ENCODE measurements at regions of chr6 and their contacts with region 1.

Region 1: GRCh38 chr6:4018172-4018905 is 60.6 kb downstream of the FAM217A start:
- DNase-seq: peak; percentile 94 to 96 (median 95)
- H3K4me3 ChIP-seq: peak overlapping the region; percentile 57 to 64
- H3K4me3 Mint-ChIP-seq: peak overlapping the region; percentile 89 to 99 (median 96)
- H3K27ac ChIP-seq: peak overlapping the region; percentile 91
- H3K27ac Mint-ChIP-seq: peak overlapping the region; percentile 90 to 98 (median 96)
- H3K4me1 ChIP-seq: peaks cover 71% of the 10 kb centered on the region
- H3K4me1 Mint-ChIP-seq: peaks cover 49 to 88% (median 66%) of the 10 kb centered on the region in 4 donors
- H3K27me3 ChIP-seq: no peaks in the 10 kb centered on the region
- H3K27me3 Mint-ChIP-seq: no peaks in the 10 kb centered on the region

Region 2: DNA sequence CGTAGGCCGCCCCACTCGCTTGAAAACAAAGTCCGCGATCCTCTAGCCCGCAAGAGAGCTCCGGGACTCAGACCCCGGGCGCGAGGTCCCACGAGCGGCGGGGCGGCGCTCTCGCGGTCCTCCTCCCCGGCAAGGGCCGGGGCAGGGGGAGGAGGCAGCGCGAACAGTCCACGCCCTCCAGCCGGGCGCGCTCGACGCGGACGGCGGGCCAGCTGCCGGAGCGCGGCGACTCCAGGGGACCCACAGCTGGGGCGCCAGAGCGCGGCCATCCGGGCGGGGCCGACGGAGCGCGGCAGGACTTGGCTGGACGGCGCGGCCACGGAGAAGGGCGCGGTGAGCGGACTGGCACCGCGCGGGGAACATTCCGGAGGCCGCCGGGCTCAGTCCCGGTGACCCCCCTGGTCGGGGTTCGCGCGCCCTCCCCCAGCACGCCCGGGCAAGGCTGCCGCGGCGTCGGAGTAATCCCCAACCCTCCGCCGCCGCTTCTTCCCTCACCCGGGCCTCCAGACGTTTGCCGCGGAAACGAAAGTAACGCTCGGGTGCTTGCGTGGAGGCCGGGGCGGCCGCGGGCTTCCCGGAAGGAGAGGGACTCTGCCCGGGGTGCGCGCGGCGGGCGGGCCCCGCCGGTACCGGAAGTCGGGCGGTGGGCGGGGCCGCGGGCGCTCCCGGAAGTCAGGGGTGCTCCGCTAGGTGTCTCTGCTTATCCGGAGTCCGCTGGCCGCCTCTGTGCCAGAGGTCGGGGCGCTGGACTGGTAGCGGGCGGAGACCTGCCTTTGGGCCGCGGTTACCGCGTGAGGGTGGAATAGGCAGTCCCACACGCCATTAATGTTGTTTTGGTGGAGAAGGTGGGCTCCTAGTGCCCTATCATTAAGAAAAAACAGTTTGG is 949.8 kb before region 1 on chr6 and contains the start of gene RIPK1:
- CTCF ChIA-PET with region 1: interaction called, 3 read pairs
- POLR2A ChIA-PET with region 1: interaction called, 4 read pairs
- intact Hi-C with region 1: loop called (anchors 2 kb)
- DNase-seq: peak; percentile 93 to 96 (median 94)
- H3K4me3 ChIP-seq: peak within 1 kb of the TSS; percentile 64 to 88
- H3K4me3 Mint-ChIP-seq: peak within 1 kb of the TSS; percentile 94 to 99 (median 96)
- H3K27ac ChIP-seq: peak within 1 kb of the TSS; percentile 98
- H3K27ac Mint-ChIP-seq: peak within 1 kb of the TSS; percentile 96 to 99 (median 98)
- H3K4me1 ChIP-seq: peaks cover 61% of the 10 kb centered on the region
- H3K4me1 Mint-ChIP-seq: peaks cover 40 to 85% (median 57%) of the 10 kb centered on the region in 4 donors
- H3K27me3 ChIP-seq: no peaks in the 10 kb centered on the region
- H3K27me3 Mint-ChIP-seq: no peaks in the 10 kb centered on the region
- total RNA-seq, gene RIPK1: 38.7 to 39.0 TPM

Region 3: GRCh38 chr6:3356056-3356761 is 662.1 kb before region 1 on chr6:
- CTCF ChIA-PET with region 1: interaction called, 4 read pairs
- POLR2A ChIA-PET with region 1: interaction called, 3 read pairs
- intact Hi-C with region 1: loop called (anchors 2 kb)
- DNase-seq: peak; percentile 65 to 84 (median 78)
- H3K4me3 ChIP-seq: peak overlapping the region; percentile 14 to 59
- H3K4me3 Mint-ChIP-seq: peak overlapping the region; percentile 86 to 93 (median 88)
- H3K27ac ChIP-seq: peak overlapping the region; percentile 57
- H3K27ac Mint-ChIP-seq: peak overlapping the region; percentile 94 to 98 (median 97)
- H3K4me1 ChIP-seq: peaks cover 36% of the 10 kb centered on the region
- H3K4me1 Mint-ChIP-seq: peaks cover 33 to 58% (median 42%) of the 10 kb centered on the region in 4 donors
- H3K27me3 ChIP-seq: no peaks in the 10 kb centered on the region
- H3K27me3 Mint-ChIP-seq: peaks cover 1 to 4% of the 10 kb centered on the region in 2 donors

Region 4: DNA sequence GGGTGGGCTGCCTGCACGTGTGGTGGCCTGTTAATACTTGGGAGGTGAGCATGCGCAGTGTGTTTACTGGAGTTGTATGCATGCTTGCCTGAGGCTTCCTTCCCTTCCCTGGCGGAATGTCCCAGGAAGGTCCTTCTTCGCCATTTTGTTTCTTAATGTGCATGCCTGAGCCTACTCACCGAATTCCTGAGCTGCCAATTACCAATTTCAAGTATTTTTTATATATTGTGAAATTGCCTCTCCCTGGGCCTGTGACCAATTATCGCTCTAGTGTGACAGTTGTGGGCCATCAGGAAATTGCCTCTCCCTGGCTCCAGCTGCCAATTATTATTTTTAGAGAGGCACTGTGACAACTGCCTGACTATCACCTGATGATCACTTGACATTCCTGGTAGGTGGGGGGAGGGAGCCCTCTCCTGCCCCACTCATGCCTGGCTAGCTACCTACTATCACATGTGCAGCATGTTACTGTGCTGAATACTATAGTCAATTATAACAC is 99.2 kb before region 1 on chr6:
- CTCF ChIA-PET with region 1: interaction called, 3 read pairs
- POLR2A ChIA-PET with region 1: interaction called, 7 read pairs
- intact Hi-C with region 1: loop called (anchors 5 kb)
- DNase-seq: no peak
- H3K4me3 ChIP-seq: no peak overlapping the region
- H3K4me3 Mint-ChIP-seq: peak overlapping the region in 1 of 8 donors; percentile 23
- H3K27ac ChIP-seq: no peak overlapping the region
- H3K27ac Mint-ChIP-seq: no peak overlapping the region
- H3K4me1 ChIP-seq: peaks cover 26% of the 10 kb centered on the region
- H3K4me1 Mint-ChIP-seq: peaks cover 18 to 33% (median 26%) of the 10 kb centered on the region in 4 donors
- H3K27me3 ChIP-seq: no peaks in the 10 kb centered on the region
- H3K27me3 Mint-ChIP-seq: peaks cover under 1 to 2% of the 10 kb centered on the region in 2 donors

Region 5: GRCh38 chr6:3997177-3997770 is 21.1 kb before region 1 on chr6:
- CTCF ChIA-PET with region 1: interaction called, 21 read pairs
- POLR2A ChIA-PET with region 1: interaction called, 5 read pairs
- intact Hi-C with region 1: no loop called
- DNase-seq: no peak
- H3K4me3 ChIP-seq: no peak overlapping the region
- H3K4me3 Mint-ChIP-seq: no peak overlapping the region
- H3K27ac ChIP-seq: no peak overlapping the region
- H3K27ac Mint-ChIP-seq: peak overlapping the region in 1 of 7 donors; percentile 48
- H3K4me1 ChIP-seq: no peaks in the 10 kb centered on the region
- H3K4me1 Mint-ChIP-seq: peaks cover 12 to 24% (median 20%) of the 10 kb centered on the region in 4 donors
- H3K27me3 ChIP-seq: no peaks in the 10 kb centered on the region
- H3K27me3 Mint-ChIP-seq: no peaks in the 10 kb centered on the region

Region 6: GRCh38 chr6:4135665-4136353 is 117.5 kb after region 1 on chr6:
- CTCF ChIA-PET with region 1: interaction called, 15 read pairs
- POLR2A ChIA-PET with region 1: interaction called, 101 read pairs
- intact Hi-C with region 1: loop called (anchors 1 kb)
- DNase-seq: peak; percentile 86 to 93 (median 87)
- H3K4me3 ChIP-seq: peak overlapping the region; percentile 43 to 72
- H3K4me3 Mint-ChIP-seq: peak overlapping the region; percentile 83 to 94 (median 88)
- H3K27ac ChIP-seq: peak overlapping the region; percentile 51
- H3K27ac Mint-ChIP-seq: peak overlapping the region; percentile 71 to 93 (median 92)
- H3K4me1 ChIP-seq: peaks cover 28% of the 10 kb centered on the region
- H3K4me1 Mint-ChIP-seq: peaks cover 21 to 50% (median 36%) of the 10 kb centered on the region in 4 donors
- H3K27me3 ChIP-seq: no peaks in the 10 kb centered on the region
- H3K27me3 Mint-ChIP-seq: no peaks in the 10 kb centered on the region

Region 7: GRCh38 chr6:4180652-4181255 is 162.4 kb after region 1 on chr6:
- CTCF ChIA-PET with region 1: no interaction called
- POLR2A ChIA-PET with region 1: no interaction called
- intact Hi-C with region 1: no loop called
- DNase-seq: no peak
- H3K4me3 ChIP-seq: no peak overlapping the region
- H3K4me3 Mint-ChIP-seq: no peak overlapping the region
- H3K27ac ChIP-seq: no peak overlapping the region
- H3K27ac Mint-ChIP-seq: no peak overlapping the region
- H3K4me1 ChIP-seq: no peaks in the 10 kb centered on the region
- H3K4me1 Mint-ChIP-seq: peaks cover 0 to 6% (median 2%) of the 10 kb centered on the region in 4 donors
- H3K27me3 ChIP-seq: no peaks in the 10 kb centered on the region
- H3K27me3 Mint-ChIP-seq: peaks cover 0 to 12% of the 10 kb centered on the region in 2 donors